Sciatic nerve (tissue), 2 donors: ENCODE measurements at regions of chr9 and their contacts with region 1.

Region 1: DNA sequence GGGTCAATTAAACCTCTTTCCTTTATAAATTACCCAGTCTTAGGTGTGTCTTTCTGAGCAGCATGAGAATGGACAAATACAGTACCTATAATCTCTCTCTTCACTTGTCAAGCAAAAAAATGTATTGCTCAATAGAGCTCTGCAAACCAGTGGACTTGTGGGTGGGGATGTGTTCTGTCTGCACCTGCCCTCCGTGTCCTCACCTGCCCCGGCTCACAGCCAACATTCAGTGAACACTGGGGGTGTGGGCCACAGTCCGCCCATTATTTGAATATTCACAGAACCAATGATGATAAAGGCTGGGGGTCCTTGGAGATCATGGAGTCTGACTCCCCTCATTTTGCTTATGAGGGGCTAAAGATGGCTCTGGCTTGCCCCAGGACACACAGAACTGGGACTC is 36.9 kb upstream of the MED27 start:
- DNase-seq: no peak
- ATAC-seq: no peak

Region 2: GRCh38 chr9:130554606-130555005 is 1562.0 kb before region 1 on chr9:
- intact Hi-C with region 1: loop called (anchors 5 kb)
- DNase-seq: no peak
- ATAC-seq: no peak

Region 3: DNA sequence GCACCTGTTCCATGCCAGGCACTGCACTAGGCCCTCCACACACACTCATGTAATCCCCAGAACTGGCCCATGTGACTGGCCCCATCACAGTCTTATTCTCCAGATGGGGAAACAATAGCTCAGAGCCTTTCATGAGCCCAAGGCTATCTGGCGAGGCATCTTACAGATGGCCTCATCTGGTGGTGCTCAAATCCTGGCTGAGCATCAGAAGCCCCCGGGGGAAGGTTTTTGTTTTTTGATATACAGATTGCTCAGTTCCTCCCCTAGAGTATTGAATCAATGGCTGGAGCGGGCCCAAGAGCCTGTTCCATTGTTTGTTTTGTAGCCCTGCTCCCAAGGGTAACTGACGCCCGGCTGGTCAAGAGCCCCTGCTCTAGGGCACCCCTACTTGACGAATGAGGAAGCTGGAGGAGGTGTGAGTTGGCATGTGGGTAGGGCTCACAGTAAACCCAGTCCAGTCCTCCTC is 231.4 kb before region 1 on chr9:
- intact Hi-C with region 1: no loop called
- DNase-seq: no peak
- ATAC-seq: no peak